Transverse colon (tissue), 4 donors: ENCODE measurements at regions of chr11 and their contacts with region 1.

Region 1: GRCh38 chr11:23475136-23475535 is 614.9 kb upstream of the CCDC179 start:
- DNase-seq: no peak
- H3K4me3 ChIP-seq: no peak overlapping the region
- H3K27ac ChIP-seq: no peak overlapping the region
- H3K4me1 ChIP-seq: no peaks in the 10 kb centered on the region
- H3K27me3 ChIP-seq: no peaks in the 10 kb centered on the region
- CTCF ChIP-seq: no peak
- EP300 ChIP-seq: no peak
- POLR2A ChIP-seq: no peak

Region 2: DNA sequence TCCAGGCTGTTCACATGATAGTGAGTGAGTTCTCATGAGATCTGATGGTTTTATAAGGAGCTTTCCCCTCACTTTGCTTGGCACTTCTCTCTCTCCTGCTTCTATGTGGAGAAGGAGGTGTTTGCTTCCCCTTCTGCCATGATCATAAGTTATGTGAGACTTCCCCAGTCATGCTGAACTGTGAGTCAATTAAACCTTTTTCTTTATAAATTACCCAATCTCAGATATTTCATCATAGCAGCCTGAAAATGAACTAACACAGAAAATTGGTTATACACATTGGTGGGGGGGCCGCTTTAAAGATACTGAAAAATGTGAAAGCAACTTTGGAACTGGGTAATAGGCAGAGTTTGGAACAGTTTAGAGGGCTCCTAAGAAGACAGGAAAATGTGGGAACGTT is 280.6 kb after region 1 on chr11:
- in situ Hi-C with region 1: no loop called
- intact Hi-C with region 1: loop called (anchors 5 kb)
- DNase-seq: no peak
- H3K4me3 ChIP-seq: no peak overlapping the region
- H3K27ac ChIP-seq: no peak overlapping the region
- H3K4me1 ChIP-seq: no peaks in the 10 kb centered on the region
- H3K27me3 ChIP-seq: no peaks in the 10 kb centered on the region
- CTCF ChIP-seq: no peak
- EP300 ChIP-seq: no peak
- POLR2A ChIP-seq: no peak